Colonic mucosa (tissue), 4 donors: ENCODE measurements at regions of chr15 and their contacts with region 1.

Region 1: DNA sequence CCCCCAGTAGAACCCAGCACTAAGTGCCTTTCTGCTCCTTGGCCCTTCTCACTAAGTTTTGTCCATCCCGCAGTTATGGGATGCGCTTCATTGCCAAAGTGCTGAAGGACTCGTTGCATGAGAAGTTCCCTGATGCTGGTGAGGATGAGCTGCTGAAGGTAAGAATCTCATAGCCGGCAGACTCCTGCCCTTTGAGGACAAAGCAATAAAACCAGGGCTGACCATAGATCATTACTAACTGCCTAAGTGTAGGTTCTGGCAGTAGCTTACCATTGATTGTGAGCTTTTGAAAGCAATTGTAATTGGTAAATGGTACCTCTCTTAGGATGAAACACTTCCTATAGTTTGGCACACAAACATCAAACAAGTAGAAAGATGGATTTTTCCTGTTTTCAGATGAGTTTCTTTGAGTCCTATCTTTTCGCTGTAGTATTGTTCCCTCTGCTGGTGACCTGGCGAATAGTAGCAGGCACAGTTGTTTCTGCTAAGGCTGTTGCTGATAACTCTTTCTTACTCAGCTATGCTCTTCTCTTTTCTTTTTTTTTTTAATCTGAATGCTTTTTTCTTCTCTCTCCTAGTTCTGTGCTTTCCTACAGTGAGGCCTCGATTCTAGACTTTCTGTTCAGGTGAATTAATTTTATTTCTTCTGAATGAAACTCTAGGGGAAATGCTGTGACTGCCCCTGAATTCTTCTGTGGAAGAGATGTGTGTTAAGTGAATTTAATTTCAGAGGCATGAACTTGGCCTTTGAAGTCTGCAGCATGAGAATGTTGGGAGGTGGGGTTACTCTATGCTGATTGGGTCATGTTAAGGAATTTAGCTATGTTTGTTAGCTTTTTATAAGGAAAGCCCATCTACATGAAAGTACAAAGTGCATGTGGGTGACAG is 47.4 kb upstream of the CRTC3 start:
- DNase-seq: peak; percentile 52
- H3K4me3 ChIP-seq: no peak overlapping the region
- H3K27ac ChIP-seq: no peak overlapping the region
- H3K4me1 ChIP-seq: no peaks in the 10 kb centered on the region
- H3K27me3 ChIP-seq: no peaks in the 10 kb centered on the region
- CTCF ChIP-seq: peak; percentile 45

Region 2: GRCh38 chr15:90320061-90320884 is 162.1 kb before region 1 on chr15:
- intact Hi-C with region 1: loop called (anchors 5 kb)
- DNase-seq: peak; percentile 79
- H3K4me3 ChIP-seq: peak overlapping the region; percentile 17
- H3K27ac ChIP-seq: peak overlapping the region; percentile 40
- H3K4me1 ChIP-seq: peaks cover 7% of the 10 kb centered on the region
- H3K27me3 ChIP-seq: no peaks in the 10 kb centered on the region
- CTCF ChIP-seq: peak; percentile 97